Caco-2 (cell line): ENCODE measurements at regions of chr9 and their contacts with region 1.

Region 1: DNA sequence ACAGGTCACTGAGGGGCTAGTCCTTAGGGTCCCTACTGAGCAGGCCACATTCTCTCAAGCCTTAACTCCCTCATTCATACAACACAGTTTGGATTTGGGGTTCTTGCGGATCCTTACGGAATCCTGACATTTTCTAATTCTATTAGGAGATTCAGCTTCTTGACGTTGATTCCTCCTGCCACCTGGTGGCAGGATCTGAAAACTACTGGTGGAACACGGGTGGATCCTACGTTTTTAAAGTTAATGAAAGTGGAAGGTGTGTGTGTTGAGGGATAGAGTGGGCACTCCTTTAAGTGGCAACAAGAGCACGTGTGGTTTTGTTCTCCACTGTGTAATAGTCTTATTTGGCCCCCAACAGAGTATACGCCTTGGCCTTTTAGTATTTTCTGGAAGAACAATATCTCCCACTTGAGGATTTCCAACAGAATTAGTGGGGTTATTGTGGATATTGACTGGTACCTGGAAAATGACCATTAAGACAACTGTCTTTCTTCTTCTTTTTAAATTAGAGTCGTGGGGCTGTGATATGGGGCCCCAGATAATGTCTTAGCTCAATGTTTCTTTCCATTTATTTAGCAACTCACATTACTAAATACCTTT is 25.2 kb downstream of the SLC28A3 start:
- DNase-seq: peak; percentile 32 to 38
- H3K4me3 ChIP-seq: no peak overlapping the region
- H3K4me3 Mint-ChIP-seq: no peak overlapping the region
- H3K27ac Mint-ChIP-seq: no peak overlapping the region
- H3K4me1 ChIP-seq: no peaks in the 10 kb centered on the region
- H3K4me1 Mint-ChIP-seq: no peaks in the 10 kb centered on the region
- H3K27me3 ChIP-seq: no peaks in the 10 kb centered on the region
- H3K27me3 Mint-ChIP-seq: no peaks in the 10 kb centered on the region
- CTCF ChIP-seq: peak; percentile 44 to 61

Region 2: GRCh38 chr9:84261082-84261746 is 54.2 kb before region 1 on chr9:
- CTCF ChIA-PET with region 1: no interaction called
- POLR2A ChIA-PET with region 1: no interaction called
- intact Hi-C with region 1: loop called (anchors 2 kb)
- DNase-seq: peak; percentile 63 to 67
- H3K4me3 ChIP-seq: no peak overlapping the region
- H3K4me3 Mint-ChIP-seq: no peak overlapping the region
- H3K27ac Mint-ChIP-seq: no peak overlapping the region
- H3K4me1 ChIP-seq: no peaks in the 10 kb centered on the region
- H3K4me1 Mint-ChIP-seq: no peaks in the 10 kb centered on the region
- H3K27me3 ChIP-seq: no peaks in the 10 kb centered on the region
- H3K27me3 Mint-ChIP-seq: no peaks in the 10 kb centered on the region
- CTCF ChIP-seq: peak; percentile 65 to 69